ENCODE measurements at regions of chr1 and their contacts with region 1.

Region 1: GRCh38 chr1:229156872-229157271 is 114.0 kb upstream of the RAB4A start:
- DNase-seq: peak; percentile 42 to 49
- H3K4me3 ChIP-seq: no peak overlapping the region
- H3K4me3 Mint-ChIP-seq: no peak overlapping the region
- H3K27ac Mint-ChIP-seq: no peak overlapping the region
- H3K4me1 ChIP-seq: no peaks in the 10 kb centered on the region
- H3K4me1 Mint-ChIP-seq: no peaks in the 10 kb centered on the region
- H3K27me3 ChIP-seq: no peaks in the 10 kb centered on the region
- H3K27me3 Mint-ChIP-seq: no peaks in the 10 kb centered on the region
- CTCF ChIP-seq: peak; percentile 67

Region 2: GRCh38 chr1:228691926-228692325 is 464.9 kb before region 1 on chr1:
- CTCF ChIA-PET with region 1: interaction called, 10 read pairs
- POLR2A ChIA-PET with region 1: no interaction called
- intact Hi-C with region 1: loop called (anchors 1 kb)
- DNase-seq: peak in 1 of 2 experiments; percentile 63
- H3K4me3 ChIP-seq: no peak overlapping the region
- H3K4me3 Mint-ChIP-seq: no peak overlapping the region
- H3K27ac Mint-ChIP-seq: no peak overlapping the region
- H3K4me1 ChIP-seq: no peaks in the 10 kb centered on the region
- H3K4me1 Mint-ChIP-seq: no peaks in the 10 kb centered on the region
- H3K27me3 ChIP-seq: no peaks in the 10 kb centered on the region
- H3K27me3 Mint-ChIP-seq: no peaks in the 10 kb centered on the region
- CTCF ChIP-seq: peak; percentile 37 to 72

Region 3: DNA sequence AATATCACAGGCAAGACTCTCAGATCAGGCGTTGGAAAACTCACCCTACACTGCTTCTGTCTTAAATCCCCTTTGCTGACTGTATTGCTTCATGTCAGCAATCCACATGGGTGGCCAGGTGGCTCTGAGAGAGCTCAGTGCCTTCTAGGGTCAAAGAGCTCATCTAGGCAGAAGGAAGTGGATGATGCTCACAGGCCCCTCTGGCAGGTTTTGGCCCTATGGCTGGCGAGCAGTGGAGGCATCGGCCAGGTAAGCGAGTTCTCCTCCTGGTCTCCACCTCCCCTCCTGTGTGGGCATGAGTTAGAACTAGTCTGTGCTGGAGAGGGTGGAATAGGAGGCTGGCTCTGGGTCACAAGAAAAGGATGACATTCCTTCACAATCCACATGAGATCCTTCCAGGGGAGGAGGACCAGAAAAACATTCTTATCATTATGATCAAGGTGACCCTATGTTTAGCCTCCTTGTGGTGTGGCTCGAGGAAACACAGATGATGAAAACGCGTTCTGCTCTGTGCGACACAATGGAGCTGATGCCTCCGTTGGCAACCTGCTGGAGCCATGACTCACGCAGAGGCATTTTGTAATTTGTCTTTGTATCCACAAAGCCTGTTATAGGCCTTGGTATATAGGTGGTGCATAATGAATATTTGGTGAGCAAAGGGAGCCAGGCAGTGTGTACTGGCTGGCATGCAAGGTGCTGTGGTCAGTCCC is 150.6 kb before region 1 on chr1:
- CTCF ChIA-PET with region 1: no interaction called
- POLR2A ChIA-PET with region 1: no interaction called
- intact Hi-C with region 1: no loop called
- DNase-seq: no peak
- H3K4me3 ChIP-seq: no peak overlapping the region
- H3K4me3 Mint-ChIP-seq: no peak overlapping the region
- H3K27ac Mint-ChIP-seq: no peak overlapping the region
- H3K4me1 ChIP-seq: no peaks in the 10 kb centered on the region
- H3K4me1 Mint-ChIP-seq: no peaks in the 10 kb centered on the region
- H3K27me3 ChIP-seq: no peaks in the 10 kb centered on the region
- H3K27me3 Mint-ChIP-seq: no peaks in the 10 kb centered on the region
- CTCF ChIP-seq: no peak

Region 4: GRCh38 chr1:229130028-229130668 is 26.7 kb before region 1 on chr1:
- CTCF ChIA-PET with region 1: no interaction called
- POLR2A ChIA-PET with region 1: no interaction called
- intact Hi-C with region 1: no loop called
- DNase-seq: peak in 1 of 2 experiments; percentile 45
- H3K4me3 ChIP-seq: no peak overlapping the region
- H3K4me3 Mint-ChIP-seq: no peak overlapping the region
- H3K27ac Mint-ChIP-seq: peak overlapping the region; percentile 29
- H3K4me1 ChIP-seq: peaks cover 37% of the 10 kb centered on the region
- H3K4me1 Mint-ChIP-seq: peaks cover 18% of the 10 kb centered on the region
- H3K27me3 ChIP-seq: no peaks in the 10 kb centered on the region
- H3K27me3 Mint-ChIP-seq: no peaks in the 10 kb centered on the region
- CTCF ChIP-seq: no peak